GM12878 (cell line): ENCODE measurements at regions of chr22 and their contacts with region 1.

Region 1: DNA sequence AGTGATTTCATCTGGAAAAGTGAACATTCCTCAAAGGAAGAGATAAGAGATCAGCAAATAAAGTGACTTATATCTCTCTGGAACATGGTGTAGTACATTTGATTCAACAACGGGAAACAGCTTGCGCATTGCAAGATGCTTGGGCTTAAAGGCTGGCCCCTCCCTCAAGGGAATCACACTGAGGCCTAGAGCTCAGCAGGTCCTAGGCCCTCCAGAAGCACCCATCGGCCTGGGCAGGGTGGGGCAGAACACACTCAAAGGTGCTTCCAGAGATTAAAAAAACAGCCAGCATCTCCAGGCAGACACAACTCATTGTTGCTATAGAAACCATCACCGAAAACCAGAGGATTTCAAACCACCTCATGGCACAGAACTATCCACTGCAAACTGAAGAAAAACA is 69.0 kb upstream of the ARFGAP3 start:
- DNase-seq: no peak
- ATAC-seq: no peak
- H3K4me3 ChIP-seq: no peak overlapping the region
- H3K27ac ChIP-seq: peak overlapping the region; percentile 28; the same call in 1 of the 2 replicates
- H3K4me1 ChIP-seq: peaks cover 52% of the 10 kb centered on the region
- H3K27me3 ChIP-seq: no peaks in the 10 kb centered on the region
- CTCF ChIP-seq: no peak
- EP300 ChIP-seq: no peak
- POLR2A ChIP-seq: no peak
- RAD21 ChIP-seq: no peak

Region 2: GRCh38 chr22:42895087-42895486 is 31.0 kb before region 1 on chr22:
- CTCF ChIA-PET with region 1: interaction called, 15 read pairs
- POLR2A ChIA-PET with region 1: interaction called, 15 read pairs
- RAD21 ChIA-PET with region 1: interaction called, 16 read pairs
- SMC1A ChIA-PET with region 1: interaction called, 18 read pairs
- in situ Hi-C with region 1: no loop called
- intact Hi-C with region 1: no loop called
- DNase-seq: peak; percentile 76
- ATAC-seq: peak; percentile 81
- H3K4me3 ChIP-seq: no peak overlapping the region
- H3K27ac ChIP-seq: peak overlapping the region; percentile 69
- H3K4me1 ChIP-seq: peaks cover 68% of the 10 kb centered on the region
- H3K27me3 ChIP-seq: no peaks in the 10 kb centered on the region
- CTCF ChIP-seq: no peak
- EP300 ChIP-seq: no peak
- POLR2A ChIP-seq: no peak
- RAD21 ChIP-seq: no peak

Region 3: DNA sequence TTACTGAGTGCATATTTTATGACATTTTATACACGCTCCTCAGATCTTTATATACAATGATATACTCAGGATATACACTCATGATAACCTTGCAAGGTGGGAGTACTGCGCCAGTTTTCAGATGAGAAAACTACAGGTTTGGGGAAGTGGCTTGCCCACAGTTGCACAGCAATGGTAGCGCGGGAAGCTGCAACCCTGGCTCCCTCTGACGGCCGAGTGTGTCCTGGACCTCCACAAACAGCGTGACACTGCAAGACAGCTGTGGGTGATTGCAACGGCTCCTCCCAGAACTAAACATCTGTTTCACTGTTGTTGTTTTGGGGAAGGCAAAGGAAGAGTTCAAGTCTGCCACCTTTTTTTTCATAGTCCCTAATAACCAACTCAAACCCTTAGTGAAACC is 41.8 kb after region 1 on chr22:
- CTCF ChIA-PET with region 1: interaction called, 6 read pairs
- POLR2A ChIA-PET with region 1: interaction called, 3 read pairs
- RAD21 ChIA-PET with region 1: interaction called, 8 read pairs
- SMC1A ChIA-PET with region 1: interaction called, 20 read pairs
- in situ Hi-C with region 1: no loop called
- intact Hi-C with region 1: no loop called
- DNase-seq: no peak
- ATAC-seq: peak; percentile 82
- H3K4me3 ChIP-seq: no peak overlapping the region
- H3K27ac ChIP-seq: no peak overlapping the region
- H3K4me1 ChIP-seq: peaks cover 24% of the 10 kb centered on the region
- H3K27me3 ChIP-seq: no peaks in the 10 kb centered on the region
- CTCF ChIP-seq: peak; percentile 48 to 86 (median 61)
- EP300 ChIP-seq: no peak
- POLR2A ChIP-seq: no peak
- RAD21 ChIP-seq: peak; percentile 56

Region 4: DNA sequence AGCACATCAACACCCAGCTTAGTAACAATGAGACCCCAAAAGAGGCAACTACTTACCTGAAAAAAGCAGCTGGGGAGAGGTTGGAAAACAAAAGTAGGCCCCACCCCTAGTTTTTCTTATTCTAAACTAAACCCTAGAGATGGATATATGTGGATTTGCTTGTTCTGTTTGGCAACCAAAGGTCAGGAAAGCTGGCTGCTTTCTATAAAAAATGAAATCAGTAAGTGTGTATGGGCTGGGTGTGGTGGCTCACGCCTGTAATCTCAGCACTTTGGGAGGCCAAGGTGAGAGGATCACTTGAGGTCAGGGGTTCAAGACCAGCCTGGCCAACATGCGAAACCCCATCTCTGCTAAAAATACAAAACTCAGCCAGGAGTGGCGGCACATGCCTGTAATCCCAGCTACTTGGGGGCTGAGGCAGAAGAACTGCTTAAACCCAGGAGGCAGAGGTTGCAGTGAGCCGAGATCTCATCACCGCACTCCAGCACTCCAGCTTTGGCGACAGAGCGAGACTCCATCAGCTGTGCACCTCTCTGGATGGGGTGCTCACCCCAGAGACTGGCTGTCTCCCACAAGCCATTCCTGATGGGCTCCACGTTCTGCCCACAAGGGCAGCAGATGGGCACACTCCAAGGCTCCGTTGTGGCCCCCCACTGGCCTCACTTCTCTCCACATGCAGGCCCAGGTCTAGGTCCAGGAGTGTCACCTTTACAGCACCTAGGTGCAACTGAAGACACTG is 58.9 kb after region 1 on chr22:
- CTCF ChIA-PET with region 1: no interaction called
- POLR2A ChIA-PET with region 1: no interaction called
- RAD21 ChIA-PET with region 1: no interaction called
- SMC1A ChIA-PET with region 1: no interaction called
- in situ Hi-C with region 1: no loop called
- intact Hi-C with region 1: no loop called
- DNase-seq: no peak
- ATAC-seq: no peak
- H3K4me3 ChIP-seq: no peak overlapping the region
- H3K27ac ChIP-seq: no peak overlapping the region
- H3K4me1 ChIP-seq: no peaks in the 10 kb centered on the region
- H3K27me3 ChIP-seq: no peaks in the 10 kb centered on the region
- CTCF ChIP-seq: no peak
- EP300 ChIP-seq: no peak
- POLR2A ChIP-seq: no peak
- RAD21 ChIP-seq: no peak